Lower leg skin (tissue), 4 donors: ENCODE measurements at regions of chr5 and their contacts with region 1.

Region 1: DNA sequence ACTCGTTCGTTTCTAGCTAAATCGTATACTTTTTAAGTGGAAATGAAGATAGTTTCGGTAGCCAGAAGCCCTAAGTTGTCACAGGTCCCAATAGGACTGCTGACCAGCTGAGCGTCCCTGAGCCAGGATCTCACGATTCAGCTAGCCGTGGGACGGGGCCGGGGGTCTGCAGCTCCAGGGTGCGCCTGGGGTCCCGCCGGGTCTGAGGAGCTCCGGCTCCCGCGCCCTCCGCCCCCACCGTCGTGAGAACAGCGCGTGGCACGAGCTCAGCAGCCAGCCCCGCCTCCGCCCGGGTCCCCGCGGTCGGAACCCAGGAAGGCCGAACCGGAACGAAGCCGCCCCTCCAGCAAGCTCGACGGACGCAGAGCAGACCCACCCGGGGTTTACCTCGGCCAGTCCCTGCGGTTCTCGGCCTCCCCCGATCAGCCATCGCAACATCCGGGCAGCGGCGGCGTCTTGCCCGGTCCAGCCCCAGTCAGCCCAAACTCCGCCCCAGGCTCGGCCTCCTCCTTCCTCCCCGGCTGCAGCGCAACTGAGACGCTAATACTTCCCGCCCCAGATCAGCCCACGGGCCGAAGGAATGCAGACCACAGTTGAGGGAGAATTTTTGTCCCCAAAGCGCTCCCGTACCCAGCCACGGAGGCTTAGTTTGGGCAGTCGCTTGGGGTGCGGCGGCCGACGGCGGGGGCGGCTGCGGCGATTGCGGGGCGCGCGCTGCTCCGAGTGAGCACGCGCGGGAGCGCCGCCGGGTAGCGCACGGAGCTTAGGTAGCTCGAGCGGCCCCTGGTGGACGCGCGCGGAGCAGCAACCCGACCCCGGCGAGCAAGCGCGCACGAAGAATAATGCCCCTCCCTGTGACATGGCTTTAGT is at the start of gene WDR41:
- DNase-seq: peak; percentile 89 to 98
- H3K4me3 ChIP-seq: peak within 1 kb of the TSS; percentile 84
- CTCF ChIP-seq: peak in 1 of 3 donors; percentile 42
- POLR2A ChIP-seq: no peak
- total RNA-seq, gene WDR41: 22.4 to 40.9 (median 37.4) TPM

Region 2: GRCh38 chr5:77076961-77077823 is 414.8 kb before region 1 on chr5:
- intact Hi-C with region 1: loop called (anchors 10 kb)
- DNase-seq: peak in 1 of 2 donors; percentile 93
- H3K4me3 ChIP-seq: no peak overlapping the region
- CTCF ChIP-seq: no peak
- POLR2A ChIP-seq: no peak

Region 3: DNA sequence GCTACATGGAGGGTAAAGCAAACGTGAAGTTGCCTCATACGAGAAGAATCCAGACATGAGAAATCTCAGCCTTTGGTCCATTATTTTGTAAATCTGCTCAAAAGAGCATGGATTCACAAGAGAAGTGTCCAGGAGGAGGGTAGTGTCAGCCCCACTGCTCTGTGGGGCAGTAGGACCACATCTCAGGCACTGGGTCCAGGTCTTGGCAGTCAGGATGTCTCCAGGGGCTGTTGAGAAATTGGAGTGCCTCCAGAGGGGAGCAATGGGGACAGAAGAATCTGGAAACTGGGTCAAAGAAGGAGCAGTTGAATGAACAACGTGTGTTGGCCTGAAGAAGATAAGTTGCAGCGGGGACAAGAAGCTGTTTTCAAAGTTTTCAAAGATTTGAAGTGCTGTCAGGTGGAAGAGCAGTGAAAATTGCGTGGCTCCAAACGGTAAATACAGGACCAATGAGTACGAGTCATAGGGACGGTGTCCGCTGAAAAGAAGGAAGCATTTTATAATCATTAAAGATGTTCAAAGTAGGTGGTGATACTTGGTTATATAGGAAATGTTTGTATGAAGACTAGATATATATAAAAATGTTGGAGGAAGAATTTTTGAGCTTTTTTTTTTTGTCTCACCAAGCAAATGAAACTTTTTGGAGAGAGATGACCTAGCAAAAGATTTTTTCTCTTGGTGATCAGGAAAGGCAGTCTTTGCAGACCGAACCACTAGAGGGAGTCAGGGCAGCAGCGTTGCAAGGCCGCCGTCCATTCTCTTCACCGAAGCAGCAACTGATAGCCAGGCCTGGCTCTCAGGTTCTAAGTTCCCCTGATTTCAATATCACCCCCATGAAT is 347.8 kb before region 1 on chr5:
- intact Hi-C with region 1: loop called (anchors 10 kb)
- DNase-seq: peak; percentile 68 to 93
- H3K4me3 ChIP-seq: no peak overlapping the region
- CTCF ChIP-seq: no peak
- POLR2A ChIP-seq: no peak